ENCODE measurements at regions of chr2 and their contacts with region 1.

Region 1: GRCh38 chr2:55519938-55520885 is 694 bp downstream of the CFAP36 start:
- DNase-seq: peak; percentile 9 to 63 (median 36)
- ATAC-seq: peak; percentile 32
- H3K4me3 ChIP-seq: peak overlapping the region; percentile 73
- H3K4me3 Mint-ChIP-seq: peak overlapping the region; percentile 96
- H3K27ac ChIP-seq: peak overlapping the region; percentile 86 to 89
- H3K27ac Mint-ChIP-seq: peak overlapping the region; percentile 98
- H3K4me1 ChIP-seq: peaks cover 11% of the 10 kb centered on the region
- H3K4me1 Mint-ChIP-seq: peaks cover 17% of the 10 kb centered on the region
- H3K27me3 ChIP-seq: no peaks in the 10 kb centered on the region
- H3K27me3 Mint-ChIP-seq: no peaks in the 10 kb centered on the region
- CTCF ChIP-seq: no peak

Region 2: GRCh38 chr2:55223958-55224760 is 296.1 kb before region 1 on chr2:
- CTCF ChIA-PET with region 1: no interaction called
- POLR2A ChIA-PET with region 1: interaction called, 24 read pairs
- intact Hi-C with region 1: no loop called
- DNase-seq: peak in 3 of 14 experiments; percentile 9 to 46 (median 34)
- ATAC-seq: no peak
- H3K4me3 ChIP-seq: peak overlapping the region; percentile 53
- H3K4me3 Mint-ChIP-seq: peak overlapping the region; percentile 87
- H3K27ac ChIP-seq: peak overlapping the region in 1 of 2 donors; percentile 80
- H3K27ac Mint-ChIP-seq: peak overlapping the region; percentile 86
- H3K4me1 ChIP-seq: peaks cover 14% of the 10 kb centered on the region
- H3K4me1 Mint-ChIP-seq: peaks cover 42% of the 10 kb centered on the region
- H3K27me3 ChIP-seq: no peaks in the 10 kb centered on the region
- H3K27me3 Mint-ChIP-seq: no peaks in the 10 kb centered on the region
- CTCF ChIP-seq: no peak

Region 3: GRCh38 chr2:55232084-55232862 is 287.9 kb before region 1 on chr2 and contains the starts of genes CLHC1 and RPS27A:
- CTCF ChIA-PET with region 1: no interaction called
- POLR2A ChIA-PET with region 1: interaction called, 25 read pairs
- intact Hi-C with region 1: loop called (anchors 2 kb)
- DNase-seq: peak; percentile 90 to 96 (median 94)
- ATAC-seq: peak; percentile 87
- H3K4me3 ChIP-seq: peak within 1 kb of the TSS; percentile 77
- H3K4me3 Mint-ChIP-seq: peak within 1 kb of the TSS; percentile 95
- H3K27ac ChIP-seq: peak within 1 kb of the TSS; percentile 97 to 100
- H3K27ac Mint-ChIP-seq: peak within 1 kb of the TSS; percentile 92
- H3K4me1 ChIP-seq: peaks cover 31% of the 10 kb centered on the region
- H3K4me1 Mint-ChIP-seq: peaks cover 81% of the 10 kb centered on the region
- H3K27me3 ChIP-seq: no peaks in the 10 kb centered on the region
- H3K27me3 Mint-ChIP-seq: no peaks in the 10 kb centered on the region
- CTCF ChIP-seq: no peak
- total RNA-seq, gene CLHC1: 4.4 TPM
- total RNA-seq, gene RPS27A: 2,201 to 2,315 TPM

Region 4: DNA sequence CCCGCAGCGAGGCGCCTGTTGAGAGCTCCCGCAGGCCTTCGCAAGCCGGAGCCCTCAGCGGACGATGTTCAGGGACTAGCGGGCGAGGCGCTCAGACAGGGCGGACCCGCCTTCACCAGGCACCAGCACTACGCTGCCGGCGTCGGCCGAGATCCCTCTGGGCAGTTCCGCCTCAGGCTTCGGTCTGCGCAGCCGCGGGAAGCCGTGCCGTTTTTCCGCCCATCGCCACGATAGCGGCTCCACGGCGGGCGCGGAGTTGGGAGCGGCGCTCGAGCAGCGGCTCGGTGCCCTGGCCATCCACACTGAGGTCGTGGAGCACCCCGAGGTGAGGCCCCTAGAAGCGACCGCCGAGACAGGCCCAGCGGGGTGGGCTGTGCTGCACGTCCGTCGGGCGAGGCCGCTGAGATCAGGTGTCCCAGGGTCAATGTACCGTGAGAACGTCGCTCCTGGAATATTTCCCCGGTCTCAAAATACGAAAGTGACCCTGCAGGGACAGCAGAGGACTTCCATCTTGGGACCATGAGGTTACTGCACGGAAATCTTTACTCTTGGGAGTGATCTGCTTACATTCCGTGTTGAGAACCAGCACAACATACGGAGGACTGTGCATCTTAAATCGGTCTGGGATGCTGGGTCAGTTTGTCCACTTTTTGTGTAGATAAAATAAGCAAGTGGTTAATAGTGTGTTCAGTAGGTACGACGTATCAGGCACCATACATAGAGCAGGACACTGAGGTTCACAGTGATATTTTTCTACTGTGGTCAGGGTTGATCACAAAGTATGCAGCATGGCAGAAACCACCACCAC is 237.9 kb before region 1 on chr2:
- CTCF ChIA-PET with region 1: no interaction called
- POLR2A ChIA-PET with region 1: interaction called, 6 read pairs
- intact Hi-C with region 1: loop called in 1 of 2 experiments (anchors 5 kb)
- DNase-seq: peak; percentile 77 to 93 (median 86)
- ATAC-seq: peak; percentile 98
- H3K4me3 ChIP-seq: peak overlapping the region; percentile 81
- H3K4me3 Mint-ChIP-seq: peak overlapping the region; percentile 96
- H3K27ac ChIP-seq: peak overlapping the region; percentile 78 to 88
- H3K27ac Mint-ChIP-seq: peak overlapping the region; percentile 97
- H3K4me1 ChIP-seq: peaks cover 11% of the 10 kb centered on the region
- H3K4me1 Mint-ChIP-seq: peaks cover 31% of the 10 kb centered on the region
- H3K27me3 ChIP-seq: no peaks in the 10 kb centered on the region
- H3K27me3 Mint-ChIP-seq: no peaks in the 10 kb centered on the region
- CTCF ChIP-seq: no peak

Region 5: DNA sequence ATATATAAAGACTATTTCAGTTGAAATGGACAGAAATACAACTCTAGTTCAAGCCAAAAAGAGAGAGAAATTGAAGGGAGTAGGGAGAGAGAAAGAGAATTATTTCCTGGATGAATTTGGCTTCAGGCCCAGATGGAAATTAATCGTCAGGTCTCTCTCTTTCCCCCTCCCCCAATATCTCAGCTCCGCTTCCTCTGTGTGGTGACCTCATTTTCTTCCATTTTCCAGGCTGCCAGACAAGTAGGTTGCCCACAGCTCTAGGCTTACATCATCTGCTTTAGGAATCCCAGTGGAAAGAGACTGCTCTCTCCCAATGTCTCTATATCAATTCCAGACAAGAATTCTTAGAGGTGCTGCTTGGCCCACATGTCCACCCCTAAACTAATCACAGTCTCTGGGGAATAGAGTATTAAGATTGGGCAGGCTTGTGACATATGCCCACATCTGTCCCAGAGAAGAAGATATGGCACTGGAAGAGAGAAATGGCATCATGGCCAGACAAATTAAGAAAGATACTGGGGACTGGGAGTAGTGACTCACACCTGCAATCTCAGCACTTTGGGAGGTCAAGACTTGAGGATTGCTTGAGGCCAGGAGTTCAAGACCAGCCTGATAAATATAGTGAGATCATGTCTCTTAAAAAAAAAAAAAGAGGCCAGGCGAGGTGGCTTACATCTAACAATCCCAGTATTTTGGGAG is 37.9 kb before region 1 on chr2:
- CTCF ChIA-PET with region 1: no interaction called
- POLR2A ChIA-PET with region 1: no interaction called
- intact Hi-C with region 1: no loop called
- DNase-seq: no peak
- ATAC-seq: no peak
- H3K4me3 ChIP-seq: no peak overlapping the region
- H3K4me3 Mint-ChIP-seq: no peak overlapping the region
- H3K27ac ChIP-seq: no peak overlapping the region
- H3K27ac Mint-ChIP-seq: no peak overlapping the region
- H3K4me1 ChIP-seq: no peaks in the 10 kb centered on the region
- H3K4me1 Mint-ChIP-seq: no peaks in the 10 kb centered on the region
- H3K27me3 ChIP-seq: no peaks in the 10 kb centered on the region
- H3K27me3 Mint-ChIP-seq: no peaks in the 10 kb centered on the region
- CTCF ChIP-seq: no peak

Region 6: GRCh38 chr2:55530539-55531081 is 10.4 kb after region 1 on chr2:
- CTCF ChIA-PET with region 1: interaction called, 4 read pairs
- POLR2A ChIA-PET with region 1: interaction called, 128 read pairs
- intact Hi-C with region 1: no loop called
- DNase-seq: peak in 3 of 14 experiments; percentile 44 to 59 (median 45)
- ATAC-seq: peak; percentile 73
- H3K4me3 ChIP-seq: no peak overlapping the region
- H3K4me3 Mint-ChIP-seq: peak overlapping the region; percentile 28
- H3K27ac ChIP-seq: peak overlapping the region; percentile 51 to 60
- H3K27ac Mint-ChIP-seq: peak overlapping the region; percentile 83
- H3K4me1 ChIP-seq: peaks cover 15% of the 10 kb centered on the region
- H3K4me1 Mint-ChIP-seq: peaks cover 36% of the 10 kb centered on the region
- H3K27me3 ChIP-seq: no peaks in the 10 kb centered on the region
- H3K27me3 Mint-ChIP-seq: no peaks in the 10 kb centered on the region
- CTCF ChIP-seq: no peak

Region 7: GRCh38 chr2:55547001-55547400 is 26.8 kb after region 1 on chr2:
- CTCF ChIA-PET with region 1: no interaction called
- POLR2A ChIA-PET with region 1: interaction called, 13 read pairs
- intact Hi-C with region 1: no loop called
- DNase-seq: no peak
- ATAC-seq: no peak
- H3K4me3 ChIP-seq: no peak overlapping the region
- H3K4me3 Mint-ChIP-seq: no peak overlapping the region
- H3K27ac ChIP-seq: no peak overlapping the region
- H3K27ac Mint-ChIP-seq: no peak overlapping the region
- H3K4me1 ChIP-seq: no peaks in the 10 kb centered on the region
- H3K4me1 Mint-ChIP-seq: no peaks in the 10 kb centered on the region
- H3K27me3 ChIP-seq: no peaks in the 10 kb centered on the region
- H3K27me3 Mint-ChIP-seq: no peaks in the 10 kb centered on the region
- CTCF ChIP-seq: no peak

Region 8: DNA sequence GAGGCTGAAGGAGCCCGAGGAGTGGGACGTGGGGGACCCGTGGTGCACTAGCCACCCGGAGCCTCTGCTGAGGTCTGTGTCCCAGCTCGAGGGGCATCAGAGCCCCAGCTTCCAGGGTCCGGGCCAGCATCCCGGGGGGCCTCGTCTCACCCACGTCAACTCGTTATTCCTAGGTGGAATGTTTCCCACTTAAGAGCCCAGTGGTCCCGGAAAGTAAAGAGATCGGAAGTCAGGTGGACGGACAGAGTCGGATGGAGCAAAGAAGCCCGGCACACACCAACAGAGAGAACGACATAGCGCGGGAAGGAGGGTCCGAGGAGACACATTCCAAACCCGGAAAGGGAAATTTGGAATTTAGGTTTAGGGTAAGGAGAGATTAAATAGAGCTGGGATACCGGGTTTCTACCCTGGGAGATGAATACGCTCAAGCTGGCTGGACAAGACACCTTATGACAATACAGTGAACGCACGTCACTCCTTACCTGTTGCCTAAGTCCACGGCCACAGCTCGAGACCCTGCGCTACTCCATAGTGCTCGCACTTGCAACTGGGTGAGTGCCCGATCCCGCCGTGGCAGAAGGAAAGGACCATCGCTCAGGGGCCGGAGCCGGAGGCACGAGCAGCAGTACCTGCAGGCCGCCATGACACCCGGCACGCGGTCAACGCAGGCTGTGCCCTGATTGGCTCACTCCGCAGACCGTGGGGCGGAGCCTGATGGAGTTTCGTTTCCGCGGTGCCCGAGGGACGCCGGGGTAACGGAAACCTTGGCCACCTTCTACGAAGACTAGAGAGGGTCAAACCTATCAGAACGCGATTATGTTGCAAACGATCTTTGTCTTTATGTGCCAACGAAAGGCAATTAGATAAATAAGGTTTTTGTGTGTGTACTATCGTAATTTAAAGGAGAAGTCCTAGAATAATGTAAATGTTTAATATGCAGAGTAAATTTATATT is 173.2 kb after region 1 on chr2 and contains the start of gene PNPT1:
- CTCF ChIA-PET with region 1: no interaction called
- POLR2A ChIA-PET with region 1: interaction called, 3 read pairs
- intact Hi-C with region 1: loop called in 1 of 2 experiments (anchors 5 kb)
- DNase-seq: peak; percentile 85 to 96 (median 90)
- ATAC-seq: peak; percentile 100
- H3K4me3 ChIP-seq: peak within 1 kb of the TSS; percentile 94
- H3K4me3 Mint-ChIP-seq: peak within 1 kb of the TSS; percentile 94
- H3K27ac ChIP-seq: peak within 1 kb of the TSS; percentile 31 to 37
- H3K27ac Mint-ChIP-seq: peak within 1 kb of the TSS; percentile 92
- H3K4me1 ChIP-seq: peaks cover 10% of the 10 kb centered on the region
- H3K4me1 Mint-ChIP-seq: peaks cover 44% of the 10 kb centered on the region
- H3K27me3 ChIP-seq: no peaks in the 10 kb centered on the region
- H3K27me3 Mint-ChIP-seq: no peaks in the 10 kb centered on the region
- CTCF ChIP-seq: no peak
- total RNA-seq, gene PNPT1: 10.2 to 10.3 TPM

Measured in CD4-positive, alpha-beta T cell (primary cell).